T-cell (primary cell): ENCODE measurements at regions of chr17 and their contacts with region 1.

Region 1: DNA sequence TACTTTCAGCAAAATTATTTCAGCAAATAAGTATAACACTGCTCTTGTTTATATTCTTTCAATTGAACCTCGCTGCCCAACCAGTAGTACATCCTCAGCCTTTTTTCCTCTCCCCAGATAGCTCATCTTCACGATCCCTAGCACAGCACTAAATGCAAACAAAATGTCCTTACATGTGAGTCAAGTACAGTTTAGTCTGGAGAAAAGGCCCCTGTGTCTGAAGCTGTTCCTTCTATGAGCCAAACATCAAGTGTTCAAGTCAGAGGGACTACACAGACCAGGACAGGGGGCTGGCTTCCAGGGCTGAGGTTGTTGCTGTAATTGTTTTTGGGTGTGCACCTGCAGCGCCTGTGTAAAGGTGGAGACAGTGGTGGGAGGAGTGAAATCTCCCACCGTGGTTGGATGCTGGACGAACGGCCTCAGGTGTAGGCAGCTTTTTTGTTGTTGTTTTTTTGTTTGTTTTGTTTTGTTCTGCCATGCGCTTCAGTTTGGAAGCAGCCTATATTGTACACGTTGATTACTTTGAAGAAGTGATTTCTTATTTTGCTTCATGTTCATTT is 147.1 kb downstream of the PRKCA start:
- DNase-seq: no peak
- ATAC-seq: no peak
- H3K4me3 ChIP-seq: no peak overlapping the region
- H3K4me3 Mint-ChIP-seq: peak overlapping the region in 1 of 3 donors; percentile 6
- H3K27ac ChIP-seq: no peak overlapping the region
- H3K27ac Mint-ChIP-seq: peak overlapping the region; percentile 29 to 53
- H3K4me1 ChIP-seq: peaks cover 8% of the 10 kb centered on the region in 2 experiments
- H3K4me1 Mint-ChIP-seq: peaks cover 75 to 78% (median 77%) of the 10 kb centered on the region in 3 donors
- H3K27me3 ChIP-seq: no peaks in the 10 kb centered on the region
- H3K27me3 Mint-ChIP-seq: no peaks in the 10 kb centered on the region

Region 2: GRCh38 chr17:66610361-66611133 is 161.0 kb after region 1 on chr17:
- CTCF ChIA-PET with region 1: interaction called in 1 of 2 experiments, 10 read pairs
- POLR2A ChIA-PET with region 1: no interaction called
- DNase-seq: no peak
- ATAC-seq: no peak
- H3K4me3 ChIP-seq: peak overlapping the region in 1 of 2 donors; percentile 50
- H3K4me3 Mint-ChIP-seq: no peak overlapping the region
- H3K27ac ChIP-seq: no peak overlapping the region
- H3K27ac Mint-ChIP-seq: no peak overlapping the region
- H3K4me1 ChIP-seq: peaks cover 0 to 3% of the 10 kb centered on the region in 2 experiments
- H3K4me1 Mint-ChIP-seq: peaks cover 28 to 48% (median 36%) of the 10 kb centered on the region in 3 donors
- H3K27me3 ChIP-seq: no peaks in the 10 kb centered on the region
- H3K27me3 Mint-ChIP-seq: no peaks in the 10 kb centered on the region

Region 3: DNA sequence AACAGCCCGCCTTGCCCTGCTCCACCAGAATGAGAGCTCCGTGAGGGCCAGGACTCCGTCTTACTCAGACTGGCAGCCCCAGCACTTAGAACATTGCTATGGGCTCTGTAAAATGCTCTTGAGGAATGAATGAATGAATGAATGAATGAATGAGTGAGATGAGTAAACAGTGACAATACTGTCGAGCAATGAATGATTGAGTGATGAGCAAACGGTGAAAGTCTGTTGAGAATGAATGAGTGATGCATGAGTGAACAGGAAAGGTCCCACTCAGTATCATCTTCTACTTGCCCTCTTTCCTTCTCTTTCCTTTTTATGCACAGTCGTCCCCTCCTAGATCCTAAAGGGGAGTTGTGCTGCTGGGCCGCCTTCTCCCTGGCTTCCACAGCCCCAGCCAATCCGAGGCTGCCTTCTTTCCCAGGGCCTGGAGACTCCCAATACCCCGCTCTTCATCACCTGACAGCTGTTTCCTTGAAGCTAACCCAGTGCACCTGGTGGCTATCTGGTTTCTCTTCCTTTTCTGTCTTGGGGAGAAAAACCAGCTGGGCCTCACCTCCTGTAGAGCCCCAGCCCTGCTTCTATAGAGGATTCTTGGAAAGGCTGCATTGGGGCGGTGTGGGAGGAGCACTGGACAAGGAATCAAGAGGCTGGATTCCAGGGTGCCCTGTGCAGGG is 562.1 kb after region 1 on chr17:
- CTCF ChIA-PET with region 1: no interaction called
- POLR2A ChIA-PET with region 1: no interaction called
- DNase-seq: no peak
- ATAC-seq: no peak
- H3K4me3 ChIP-seq: no peak overlapping the region
- H3K4me3 Mint-ChIP-seq: no peak overlapping the region
- H3K27ac ChIP-seq: no peak overlapping the region
- H3K27ac Mint-ChIP-seq: no peak overlapping the region
- H3K4me1 ChIP-seq: no peaks in the 10 kb centered on the region
- H3K4me1 Mint-ChIP-seq: no peaks in the 10 kb centered on the region
- H3K27me3 ChIP-seq: peaks cover 0 to 27% of the 10 kb centered on the region in 2 experiments
- H3K27me3 Mint-ChIP-seq: peaks cover 22 to 33% of the 10 kb centered on the region in 2 donors